PC-3 (cell line): ENCODE measurements at regions of chr17 and their contacts with region 1.

Region 1: DNA sequence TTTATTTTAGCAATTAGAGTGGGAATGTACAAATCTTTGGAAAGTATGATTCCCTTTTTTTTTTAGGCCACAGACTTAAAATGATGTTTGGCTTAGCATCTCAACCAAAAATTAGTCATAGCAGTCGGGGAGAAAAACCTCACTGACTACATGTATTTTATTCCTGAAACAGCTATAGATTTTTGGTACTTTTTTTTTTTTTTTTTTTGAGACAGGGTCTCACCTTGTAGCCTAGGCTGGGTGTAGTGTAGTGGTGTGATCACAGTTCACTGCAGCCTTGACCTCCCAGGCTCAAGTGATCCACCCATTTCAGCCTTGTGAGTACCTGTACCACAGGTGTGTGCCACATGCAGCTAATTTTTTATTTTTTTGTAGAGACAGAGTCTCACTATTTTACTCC is 23.4 kb downstream of the RNFT1 start:
- DNase-seq: no peak
- ATAC-seq: no peak
- H3K4me3 ChIP-seq: no peak overlapping the region
- H3K27ac ChIP-seq: peak overlapping the region; percentile 13; the same call in 1 of the 2 replicates
- H3K4me1 ChIP-seq: peaks cover 9% of the 10 kb centered on the region; the same call in 1 of the 2 replicates
- H3K27me3 ChIP-seq: no peaks in the 10 kb centered on the region
- CTCF ChIP-seq: no peak

Region 2: GRCh38 chr17:59914274-59914854 is 26.8 kb before region 1 on chr17:
- CTCF ChIA-PET with region 1: interaction called, 10 read pairs
- POLR2A ChIA-PET with region 1: no interaction called
- intact Hi-C with region 1: no loop called
- DNase-seq: peak; percentile 70
- ATAC-seq: peak; percentile 72
- H3K4me3 ChIP-seq: no peak overlapping the region
- H3K27ac ChIP-seq: no peak overlapping the region
- H3K4me1 ChIP-seq: no peaks in the 10 kb centered on the region
- H3K27me3 ChIP-seq: no peaks in the 10 kb centered on the region
- CTCF ChIP-seq: peak; percentile 77

Region 3: DNA sequence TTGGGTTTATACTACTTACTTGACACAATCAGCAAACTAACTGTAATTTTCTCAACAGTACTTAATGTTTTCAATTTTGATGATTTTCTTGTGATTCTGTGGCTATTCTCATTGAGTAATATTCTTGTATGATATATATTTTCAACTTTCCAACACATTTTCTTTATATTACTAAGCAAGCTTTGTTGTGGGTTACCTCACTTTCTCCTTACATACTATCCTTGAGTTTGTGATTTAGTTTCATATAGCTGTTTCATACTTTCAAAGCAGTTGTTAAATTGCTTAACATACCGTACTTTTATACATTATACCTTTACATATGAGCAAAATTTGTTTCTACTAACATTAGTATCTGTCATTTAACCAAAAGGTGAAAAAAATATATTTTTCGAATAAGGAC is 933.6 kb after region 1 on chr17:
- CTCF ChIA-PET with region 1: no interaction called
- POLR2A ChIA-PET with region 1: interaction called, 11 read pairs
- intact Hi-C with region 1: no loop called
- DNase-seq: no peak
- ATAC-seq: no peak
- H3K4me3 ChIP-seq: no peak overlapping the region
- H3K27ac ChIP-seq: no peak overlapping the region
- H3K4me1 ChIP-seq: no peaks in the 10 kb centered on the region
- H3K27me3 ChIP-seq: no peaks in the 10 kb centered on the region
- CTCF ChIP-seq: no peak